Right lobe of liver (tissue), 6 donors: ENCODE measurements at regions of chr19 and their contacts with region 1.

Region 1: GRCh38 chr19:51338563-51339312 is 3.2 kb downstream of the VSIG10L start:
- DNase-seq: peak; percentile 87 to 89 (median 88)
- ATAC-seq: peak; percentile 68 to 73 (median 70)
- H3K4me3 ChIP-seq: peak overlapping the region; percentile 65 to 77 (median 75)
- H3K27ac ChIP-seq: no peak overlapping the region
- H3K4me1 ChIP-seq: peaks cover 0 to 18% (median 0%) of the 10 kb centered on the region in 4 donors
- H3K27me3 ChIP-seq: no peaks in the 10 kb centered on the region
- CTCF ChIP-seq: peak; percentile 86 to 90 (median 88)
- POLR2A ChIP-seq: no peak

Region 2: DNA sequence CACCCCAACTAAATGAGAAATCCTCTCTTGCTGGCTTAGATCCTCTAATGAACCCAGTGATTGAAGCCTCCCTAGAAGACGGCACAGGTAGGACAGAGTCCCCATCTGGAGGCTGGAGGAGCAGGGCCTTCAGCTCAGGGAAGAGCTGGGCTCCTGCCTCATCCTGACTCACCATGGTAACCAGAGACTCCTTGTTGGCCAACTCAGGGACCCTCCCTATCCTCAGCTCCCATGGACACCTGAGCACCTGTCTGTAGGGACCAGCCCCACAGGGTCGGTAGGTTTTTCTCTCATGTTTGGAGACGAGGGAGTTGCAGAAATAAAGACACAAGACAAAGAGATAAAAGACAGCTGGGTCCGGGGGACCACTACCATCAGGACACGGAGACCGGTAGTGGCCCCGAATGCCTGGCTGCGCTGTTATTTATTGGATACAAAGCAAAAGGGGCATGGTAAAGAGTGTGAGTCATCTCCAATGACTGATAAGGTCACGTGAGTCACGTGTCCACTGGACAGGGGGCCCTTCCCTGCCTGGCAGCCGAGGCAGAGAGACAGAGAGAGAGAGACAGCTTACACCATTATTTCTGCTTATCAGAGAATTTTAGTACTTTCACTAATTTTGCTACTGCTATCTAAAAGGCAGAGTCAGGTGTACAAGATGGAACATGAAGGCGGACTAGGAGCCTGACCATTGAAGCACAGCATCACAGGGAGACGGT is 170.0 kb before region 1 on chr19:
- intact Hi-C with region 1: no loop called
- DNase-seq: no peak
- ATAC-seq: peak in 1 of 4 donors; percentile 23
- H3K4me3 ChIP-seq: no peak overlapping the region
- H3K27ac ChIP-seq: no peak overlapping the region
- H3K4me1 ChIP-seq: no peaks in the 10 kb centered on the region
- H3K27me3 ChIP-seq: no peaks in the 10 kb centered on the region
- CTCF ChIP-seq: no peak
- POLR2A ChIP-seq: no peak

Region 3: DNA sequence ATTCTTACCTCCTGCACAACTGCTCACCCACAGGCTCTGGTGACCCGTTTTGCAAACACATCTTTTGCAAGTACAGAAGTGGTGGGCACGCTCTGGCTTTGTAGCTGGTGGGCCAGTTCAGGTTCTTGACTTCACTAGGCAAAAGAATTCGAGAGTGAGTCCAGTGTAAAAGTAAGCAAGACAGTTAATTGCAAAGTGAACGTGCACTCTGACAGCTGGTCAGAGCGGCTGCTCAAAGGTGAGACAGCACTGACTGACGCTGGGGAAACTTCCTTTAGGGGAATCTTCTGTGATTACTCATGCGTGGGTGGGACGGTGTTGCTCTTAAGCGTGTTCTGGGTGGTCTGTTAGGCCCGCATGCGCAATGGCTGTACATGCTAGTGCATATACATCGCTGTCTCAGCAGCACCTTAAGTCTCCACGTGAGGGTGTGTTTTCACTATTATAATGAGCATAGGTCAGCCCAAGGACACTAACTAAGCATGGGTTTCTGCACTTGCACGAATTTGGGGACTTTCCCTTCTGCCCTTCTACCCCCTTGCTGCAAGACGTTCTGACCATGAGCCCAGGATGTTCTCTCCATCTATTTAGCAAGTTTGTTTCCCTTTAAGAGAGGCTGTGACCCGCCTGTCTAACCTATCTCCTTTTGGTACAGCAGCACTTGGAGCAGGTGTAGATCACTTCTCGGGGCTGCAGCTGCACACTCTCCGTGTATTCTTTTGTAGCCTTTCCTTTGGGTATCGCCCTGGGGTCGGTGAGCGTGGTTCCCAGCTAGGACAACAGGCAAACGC is 144.0 kb before region 1 on chr19:
- intact Hi-C with region 1: no loop called
- DNase-seq: no peak
- ATAC-seq: no peak
- H3K4me3 ChIP-seq: no peak overlapping the region
- H3K27ac ChIP-seq: no peak overlapping the region
- H3K4me1 ChIP-seq: no peaks in the 10 kb centered on the region
- H3K27me3 ChIP-seq: no peaks in the 10 kb centered on the region
- CTCF ChIP-seq: no peak
- POLR2A ChIP-seq: no peak

Region 4: DNA sequence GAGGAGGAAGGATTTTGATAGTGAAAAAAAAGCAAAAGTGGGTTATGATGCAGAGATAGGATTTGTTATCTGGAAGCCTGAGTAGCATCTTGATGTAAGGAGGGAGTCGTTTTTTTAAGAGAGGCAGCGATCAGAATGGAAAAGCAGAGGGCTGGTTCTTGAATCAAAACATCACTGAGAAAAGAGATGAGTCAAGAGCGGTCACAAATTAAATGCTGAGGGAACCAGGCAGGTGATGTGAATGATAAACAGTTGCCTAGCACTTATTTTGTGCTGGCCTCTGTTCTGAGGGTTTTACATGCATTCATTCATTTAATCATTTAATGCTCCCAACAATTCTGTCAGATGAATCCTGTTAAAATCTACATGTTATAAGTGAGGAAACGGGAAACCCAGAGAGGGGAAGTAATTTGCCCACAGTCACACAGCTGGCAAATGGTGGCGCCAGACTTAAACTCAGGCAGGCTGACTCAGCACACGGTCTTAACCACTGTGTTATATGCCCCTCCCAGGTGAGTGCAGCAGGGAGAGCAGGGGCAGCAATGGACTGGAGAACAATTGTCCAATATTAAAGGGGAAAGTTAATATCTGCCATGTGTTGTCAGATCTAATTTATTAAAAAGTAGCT is 66.4 kb before region 1 on chr19:
- intact Hi-C with region 1: no loop called
- DNase-seq: no peak
- ATAC-seq: peak in 3 of 4 donors; percentile 28 to 58 (median 43)
- H3K4me3 ChIP-seq: no peak overlapping the region
- H3K27ac ChIP-seq: no peak overlapping the region
- H3K4me1 ChIP-seq: no peaks in the 10 kb centered on the region
- H3K27me3 ChIP-seq: no peaks in the 10 kb centered on the region
- CTCF ChIP-seq: no peak
- POLR2A ChIP-seq: no peak

Region 5: DNA sequence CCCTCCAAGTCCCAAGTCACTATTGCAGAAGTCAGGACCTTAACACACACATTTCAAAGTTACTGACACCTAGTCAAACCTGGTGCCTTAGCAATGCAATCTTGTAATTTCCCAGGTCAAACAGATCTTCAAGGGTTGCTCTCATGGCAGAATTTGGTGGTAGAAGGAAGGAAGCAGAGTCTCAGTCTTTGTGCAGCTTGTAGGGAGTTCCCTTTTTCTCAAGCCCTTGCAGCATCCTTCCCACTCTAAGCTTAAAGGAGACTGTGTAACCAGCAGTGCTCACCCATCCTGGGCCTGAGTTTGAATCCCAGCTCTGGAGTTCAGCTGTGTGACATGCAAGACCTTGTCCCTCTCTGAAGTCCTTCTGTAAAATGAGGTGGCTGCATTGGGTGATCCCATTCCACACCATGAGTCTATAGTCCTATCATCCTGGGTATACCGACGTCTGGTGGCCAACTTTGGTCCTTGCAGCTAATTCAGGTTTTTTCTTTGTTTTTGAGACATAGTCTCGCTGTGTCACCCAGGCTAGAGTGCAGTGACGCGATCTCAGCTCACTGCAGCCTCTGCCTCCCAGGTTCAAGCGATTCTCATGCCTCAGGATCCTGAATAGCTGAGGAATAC is 68.9 kb after region 1 on chr19:
- intact Hi-C with region 1: loop called in 1 of 2 experiments (anchors 5 kb)
- DNase-seq: no peak
- ATAC-seq: peak; percentile 80 to 93 (median 86)
- H3K4me3 ChIP-seq: no peak overlapping the region
- H3K27ac ChIP-seq: no peak overlapping the region
- H3K4me1 ChIP-seq: no peaks in the 10 kb centered on the region
- H3K27me3 ChIP-seq: no peaks in the 10 kb centered on the region
- CTCF ChIP-seq: peak; percentile 51 to 66 (median 56)
- POLR2A ChIP-seq: no peak

Region 6: DNA sequence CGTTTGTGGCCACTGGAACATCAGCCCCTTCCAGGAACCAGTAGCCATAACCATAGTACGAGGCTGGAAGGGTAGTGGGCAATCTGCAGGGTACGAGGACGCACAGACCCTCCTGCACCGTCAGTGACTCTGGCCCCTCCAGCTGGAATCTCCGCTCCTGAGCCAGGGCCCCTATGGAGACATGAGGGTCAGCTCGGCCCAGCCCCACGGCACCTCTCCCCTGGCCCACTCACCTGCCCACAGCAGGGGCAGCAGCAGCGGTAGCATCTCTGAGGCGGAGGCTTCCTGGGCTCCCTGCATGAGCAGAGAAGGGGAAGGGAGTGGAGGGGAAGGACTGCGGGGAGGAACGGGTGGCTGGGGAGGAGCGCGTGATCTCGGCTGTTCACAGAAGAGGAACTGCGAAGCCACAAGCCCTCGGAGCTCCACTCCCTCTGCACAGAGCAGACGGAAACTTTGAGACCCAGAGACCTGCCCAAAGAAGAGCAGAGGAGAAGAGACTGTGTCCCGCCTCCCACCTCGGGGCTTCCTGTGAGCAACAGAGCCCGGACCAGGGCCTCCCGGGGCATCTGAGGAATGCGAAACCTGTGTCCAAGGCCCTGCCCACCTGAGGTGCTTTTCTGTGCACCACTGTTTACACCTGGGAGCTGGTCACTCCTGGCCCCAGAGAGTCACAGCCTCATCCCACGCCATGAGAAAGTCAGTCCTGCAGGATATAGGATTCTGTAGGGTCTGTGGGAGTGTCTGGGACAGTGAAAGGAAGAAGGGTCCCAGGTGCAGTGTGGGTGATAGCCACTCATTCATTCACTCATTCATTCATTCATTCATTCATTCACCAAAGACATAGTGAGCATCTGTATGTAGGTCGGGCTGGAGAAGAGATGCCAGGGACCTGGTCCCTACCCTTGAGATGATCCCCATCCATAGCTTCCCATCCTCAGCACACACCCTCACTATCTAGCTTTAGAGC is 192.9 kb after region 1 on chr19 and contains the start of gene SIGLEC6:
- intact Hi-C with region 1: no loop called
- DNase-seq: peak in 2 of 3 donors; percentile 65 to 67
- ATAC-seq: peak; percentile 63 to 86 (median 74)
- H3K4me3 ChIP-seq: no peak within 1 kb of the TSS
- H3K27ac ChIP-seq: no peak within 1 kb of the TSS
- H3K4me1 ChIP-seq: no peaks in the 10 kb centered on the region
- H3K27me3 ChIP-seq: no peaks in the 10 kb centered on the region
- CTCF ChIP-seq: no peak
- POLR2A ChIP-seq: no peak
- total RNA-seq, gene SIGLEC6: not detected